ENCODE measurements at regions of chr13 and their contacts with region 1.

Region 1: DNA sequence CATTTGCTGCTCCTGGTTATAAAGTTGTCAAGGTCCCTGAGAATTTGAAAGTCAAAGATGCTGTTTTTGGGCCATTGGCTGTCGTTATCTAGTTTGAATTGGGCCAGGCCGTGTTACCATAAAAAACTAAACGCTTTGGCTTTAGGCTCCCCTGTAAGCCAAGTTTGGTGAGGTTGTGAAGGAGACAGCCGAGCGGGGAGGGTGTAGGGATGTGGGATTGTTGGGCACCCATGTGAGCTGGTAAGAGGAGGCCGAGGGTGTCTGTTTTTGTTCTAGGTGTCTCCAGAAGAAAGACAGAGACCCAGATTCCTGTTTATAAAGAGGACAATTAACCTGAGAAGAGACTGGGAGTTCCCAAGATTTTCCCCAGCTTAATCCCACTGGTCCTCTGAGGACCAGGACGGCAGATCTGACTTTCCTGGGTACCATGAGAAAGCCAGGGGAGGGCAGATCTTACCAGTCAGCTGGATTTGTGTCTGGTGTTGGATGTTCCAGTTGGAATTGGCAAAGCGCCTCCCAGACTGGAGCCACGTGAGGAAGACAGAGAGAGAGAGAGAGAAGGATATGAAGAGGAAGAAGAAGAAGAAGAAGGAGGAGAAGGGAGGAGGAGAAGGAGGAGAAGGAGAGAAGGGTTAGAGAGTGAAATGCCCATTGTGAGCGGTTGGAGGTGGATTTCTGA is 25.1 kb downstream of the TMEM255B start:
- DNase-seq: no peak
- ATAC-seq: no peak
- H3K4me3 ChIP-seq: no peak overlapping the region
- H3K4me3 Mint-ChIP-seq: no peak overlapping the region
- H3K27ac ChIP-seq: no peak overlapping the region
- H3K27ac Mint-ChIP-seq: no peak overlapping the region
- H3K4me1 ChIP-seq: no peaks in the 10 kb centered on the region
- H3K4me1 Mint-ChIP-seq: peaks cover 0 to 2% (median 0%) of the 10 kb centered on the region in 3 donors
- H3K27me3 ChIP-seq: peaks cover 0 to 21% of the 10 kb centered on the region in 2 experiments
- H3K27me3 Mint-ChIP-seq: peaks cover 18 to 20% of the 10 kb centered on the region in 2 donors

Region 2: DNA sequence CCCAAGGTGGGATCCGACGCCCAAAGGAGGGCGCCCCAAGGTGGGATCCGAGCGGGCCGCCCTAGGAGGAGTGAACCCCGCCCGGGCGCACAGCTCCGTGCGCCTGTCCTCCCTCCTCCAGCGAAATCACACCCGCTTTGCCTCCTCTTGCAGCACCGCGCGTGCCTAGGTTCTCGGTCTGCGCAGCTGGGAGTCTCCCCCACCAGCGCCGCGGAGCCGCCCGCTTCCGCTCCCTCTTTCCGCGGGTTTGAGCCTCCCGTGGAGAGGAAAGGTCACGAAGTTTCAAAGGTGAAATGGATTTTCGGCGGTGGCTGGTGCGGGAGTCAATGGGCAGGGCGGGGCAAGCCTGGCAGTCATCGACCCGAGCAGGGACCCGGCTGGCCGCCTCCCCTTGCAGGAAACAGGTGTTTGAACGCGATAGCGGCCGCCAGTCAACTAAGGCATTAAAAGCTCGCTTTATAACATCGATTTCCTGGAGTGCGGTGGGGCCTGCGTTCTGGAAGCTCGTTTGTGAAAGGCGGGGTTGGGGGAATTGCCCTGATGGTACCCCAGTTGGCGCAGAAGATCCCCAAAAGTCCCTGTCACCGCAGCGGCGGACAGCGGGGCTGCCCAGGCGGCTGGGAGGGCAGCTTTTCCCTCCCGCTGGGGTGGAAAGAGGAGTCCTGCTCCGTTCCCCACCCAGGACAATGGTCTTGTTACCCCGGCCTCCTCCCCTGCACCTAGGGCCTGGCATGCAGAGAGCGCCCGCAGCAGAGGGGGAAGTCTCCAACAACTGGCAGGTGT is 1726.2 kb before region 1 on chr13:
- CTCF ChIA-PET with region 1: no interaction called
- POLR2A ChIA-PET with region 1: no interaction called
- DNase-seq: no peak
- ATAC-seq: no peak
- H3K4me3 ChIP-seq: peak overlapping the region in 1 of 2 donors; percentile 5
- H3K4me3 Mint-ChIP-seq: no peak overlapping the region
- H3K27ac ChIP-seq: no peak overlapping the region
- H3K27ac Mint-ChIP-seq: no peak overlapping the region
- H3K4me1 ChIP-seq: peaks cover 0 to 3% of the 10 kb centered on the region in 2 experiments
- H3K4me1 Mint-ChIP-seq: peaks cover 2 to 8% (median 5%) of the 10 kb centered on the region in 3 donors
- H3K27me3 ChIP-seq: peaks cover 34 to 92% of the 10 kb centered on the region in 2 experiments
- H3K27me3 Mint-ChIP-seq: peaks cover 47 to 69% of the 10 kb centered on the region in 2 donors

Region 3: DNA sequence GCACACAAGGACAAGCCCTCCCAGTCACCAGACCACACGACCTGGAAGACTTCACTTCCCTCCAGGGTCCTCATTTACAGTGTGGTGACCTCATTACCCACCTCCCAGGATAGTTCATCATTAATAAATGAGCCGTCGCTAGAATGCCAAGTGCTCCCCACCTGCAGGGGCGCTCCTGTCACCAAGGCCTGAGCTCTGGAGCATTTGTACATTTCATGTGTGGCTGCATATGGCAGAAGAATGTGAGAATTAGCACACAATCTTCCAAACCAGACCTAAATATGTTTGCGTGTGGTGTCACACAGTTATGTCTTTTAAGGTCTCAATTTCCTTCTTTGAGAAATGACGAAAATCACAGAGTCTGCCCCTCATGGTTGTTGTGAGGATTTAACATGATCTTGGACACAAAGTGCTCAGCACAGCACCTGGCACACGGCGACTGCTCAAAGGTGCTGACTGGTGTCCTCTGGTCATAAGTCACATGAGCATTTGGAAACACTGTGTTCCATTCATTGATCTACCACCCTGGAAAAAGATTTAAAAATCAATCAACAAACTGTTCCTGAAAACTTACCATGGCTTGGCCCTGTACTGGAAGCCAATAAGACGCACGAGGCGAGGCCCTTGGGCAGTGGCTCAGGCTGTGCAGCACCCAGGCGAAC is 1558.5 kb before region 1 on chr13:
- CTCF ChIA-PET with region 1: no interaction called
- POLR2A ChIA-PET with region 1: no interaction called
- DNase-seq: no peak
- ATAC-seq: no peak
- H3K4me3 ChIP-seq: no peak overlapping the region
- H3K4me3 Mint-ChIP-seq: no peak overlapping the region
- H3K27ac ChIP-seq: no peak overlapping the region
- H3K27ac Mint-ChIP-seq: no peak overlapping the region
- H3K4me1 ChIP-seq: no peaks in the 10 kb centered on the region
- H3K4me1 Mint-ChIP-seq: no peaks in the 10 kb centered on the region
- H3K27me3 ChIP-seq: peaks cover 0 to 6% of the 10 kb centered on the region in 2 experiments
- H3K27me3 Mint-ChIP-seq: no peaks in the 10 kb centered on the region

Region 4: DNA sequence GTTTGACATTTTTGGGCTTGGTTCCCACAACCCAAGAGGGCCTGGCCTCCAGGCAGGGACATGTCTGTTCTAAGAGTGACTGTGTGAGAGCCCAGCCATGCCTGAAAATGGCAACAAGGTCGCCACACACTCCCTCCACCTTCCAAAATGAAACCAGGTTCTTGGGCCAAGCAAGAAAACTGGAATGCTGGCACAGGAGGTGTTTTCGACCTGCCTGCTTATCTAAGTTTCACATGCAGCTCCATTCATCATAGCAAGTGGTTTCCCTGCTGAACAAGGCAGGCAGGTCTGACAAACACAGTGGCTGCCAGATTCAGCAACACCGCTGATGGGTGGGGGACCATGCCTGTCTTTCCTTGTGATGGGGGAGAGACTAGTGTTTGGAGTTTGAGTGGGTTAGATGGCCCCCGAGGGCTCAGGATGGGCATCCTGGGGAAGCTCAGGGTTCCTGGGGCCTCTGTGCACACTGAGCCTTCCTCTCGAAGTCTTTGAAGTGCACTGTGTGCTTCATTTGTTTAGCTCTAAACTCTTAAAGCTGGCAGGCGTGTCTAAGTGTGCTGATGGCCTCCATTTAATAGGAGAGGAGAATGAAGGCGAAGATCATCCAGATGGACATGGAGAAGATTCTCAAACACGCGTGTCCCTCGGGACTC is 97.6 kb after region 1 on chr13:
- CTCF ChIA-PET with region 1: no interaction called
- POLR2A ChIA-PET with region 1: interaction called in 1 of 2 experiments, 10 read pairs
- DNase-seq: peak in 3 of 35 experiments; percentile 16 to 24 (median 20)
- ATAC-seq: peak; percentile 59 to 79 (median 69)
- H3K4me3 ChIP-seq: peak overlapping the region in 1 of 2 donors; percentile 2
- H3K4me3 Mint-ChIP-seq: peak overlapping the region in 1 of 3 donors; percentile 9
- H3K27ac ChIP-seq: no peak overlapping the region
- H3K27ac Mint-ChIP-seq: peak overlapping the region; percentile 41 to 78
- H3K4me1 ChIP-seq: peaks cover 15 to 33% of the 10 kb centered on the region in 2 experiments
- H3K4me1 Mint-ChIP-seq: peaks cover 20 to 31% (median 23%) of the 10 kb centered on the region in 3 donors
- H3K27me3 ChIP-seq: peaks cover 0 to 26% of the 10 kb centered on the region in 2 experiments
- H3K27me3 Mint-ChIP-seq: peaks cover 7 to 11% of the 10 kb centered on the region in 2 donors

Measured in T-cell (primary cell).